ENCODE measurements at regions of chr16 and their contacts with region 1.

Region 1: GRCh38 chr16:67667817-67668494 is 1.3 kb downstream of the C16orf86 start:
- DNase-seq: peak; percentile 94
- H3K4me3 Mint-ChIP-seq: peak overlapping the region; percentile 91
- H3K27ac Mint-ChIP-seq: no peak overlapping the region
- H3K4me1 Mint-ChIP-seq: peaks cover 22% of the 10 kb centered on the region
- H3K27me3 Mint-ChIP-seq: no peaks in the 10 kb centered on the region

Region 2: DNA sequence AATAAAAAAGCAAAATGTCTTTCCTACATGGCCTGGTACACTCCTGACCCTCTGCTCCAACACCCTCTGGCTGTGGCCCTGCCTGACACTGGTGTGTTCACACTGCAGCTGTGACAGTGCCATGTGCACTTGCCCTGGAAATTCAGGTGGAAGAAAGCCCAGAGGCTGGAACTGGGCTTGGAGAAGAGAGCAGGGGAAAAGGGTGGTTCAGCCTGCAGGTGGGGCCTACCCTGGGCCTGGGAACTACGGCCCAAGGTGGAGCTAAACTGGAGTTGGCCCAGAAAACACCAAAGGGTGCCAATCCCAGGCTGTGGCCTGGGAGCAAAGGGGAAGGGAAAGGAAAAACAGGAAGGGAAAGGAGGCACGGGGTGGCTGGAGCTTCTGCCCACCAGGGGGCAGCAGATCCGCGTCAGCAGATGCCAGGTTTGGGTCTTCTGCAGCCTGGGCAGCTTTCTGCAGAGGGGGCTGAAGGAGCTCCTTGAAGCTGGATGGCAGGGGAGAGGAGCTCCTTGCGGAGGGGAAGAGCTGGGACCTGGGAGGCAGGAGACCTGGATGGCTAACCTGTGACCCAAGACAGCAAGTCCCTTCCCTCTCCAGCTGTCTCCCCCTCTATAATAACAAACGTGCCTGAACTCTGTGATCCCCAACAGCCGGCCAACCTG is 121.1 kb before region 1 on chr16:
- intact Hi-C with region 1: loop called (anchors 1 kb)
- DNase-seq: peak; percentile 92
- H3K4me3 Mint-ChIP-seq: peak overlapping the region; percentile 58
- H3K27ac Mint-ChIP-seq: peak overlapping the region; percentile 89
- H3K4me1 Mint-ChIP-seq: peaks cover 35% of the 10 kb centered on the region
- H3K27me3 Mint-ChIP-seq: no peaks in the 10 kb centered on the region

Region 3: DNA sequence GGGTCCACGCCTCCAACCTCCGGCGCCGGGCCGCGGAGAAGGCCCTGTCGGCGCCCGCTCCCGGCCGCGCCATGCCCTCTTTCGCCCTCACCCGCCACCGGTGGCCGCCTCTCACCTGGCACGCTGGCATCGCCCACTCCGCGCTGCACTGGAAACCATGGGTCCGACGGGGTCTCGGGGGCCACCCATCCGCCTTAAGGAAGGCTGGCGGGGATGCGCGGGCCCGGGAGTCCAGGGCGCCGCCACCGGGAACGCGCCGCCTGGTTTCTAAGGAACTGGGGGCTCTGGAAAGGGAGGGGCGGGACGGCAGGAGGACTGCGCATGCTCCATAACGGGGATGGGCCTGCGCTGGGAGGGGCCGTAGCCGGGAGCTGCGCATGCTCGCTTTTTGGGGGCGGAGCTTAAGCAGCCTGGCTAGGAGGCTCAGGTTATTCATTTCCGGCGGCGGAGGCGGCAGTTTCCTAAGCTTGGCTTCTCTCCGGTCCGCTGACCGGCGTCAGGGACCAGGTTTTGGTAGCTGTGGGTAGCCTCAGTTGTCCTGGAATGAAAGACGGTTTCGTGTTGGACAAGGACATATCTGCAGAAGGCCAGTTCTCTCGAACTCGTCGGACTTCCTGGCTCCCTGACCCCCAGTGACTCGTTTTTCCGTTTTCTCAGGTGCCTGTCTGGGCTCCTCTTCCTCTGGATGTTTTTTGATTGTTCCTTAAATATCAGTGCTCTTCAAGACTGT is 51.3 kb after region 1 on chr16 and contains the start of gene GFOD2:
- intact Hi-C with region 1: loop called (anchors 2 kb)
- DNase-seq: peak; percentile 100
- H3K4me3 Mint-ChIP-seq: peak within 1 kb of the TSS; percentile 88
- H3K27ac Mint-ChIP-seq: peak within 1 kb of the TSS; percentile 96
- H3K4me1 Mint-ChIP-seq: peaks cover 32% of the 10 kb centered on the region
- H3K27me3 Mint-ChIP-seq: no peaks in the 10 kb centered on the region
- total RNA-seq, gene GFOD2: 16.2 and 18.3 TPM in 2 replicates

Region 4: GRCh38 chr16:69339289-69340108 is 1671.5 kb after region 1 on chr16 and contains the starts of genes COG8 and NIP7:
- intact Hi-C with region 1: loop called (anchors 10 kb)
- DNase-seq: peak; percentile 98
- H3K4me3 Mint-ChIP-seq: peak within 1 kb of the TSS; percentile 98
- H3K27ac Mint-ChIP-seq: peak within 1 kb of the TSS; percentile 99
- H3K4me1 Mint-ChIP-seq: peaks cover 40% of the 10 kb centered on the region
- H3K27me3 Mint-ChIP-seq: no peaks in the 10 kb centered on the region
- total RNA-seq, gene COG8: 44.1 and 44.6 TPM in 2 replicates
- total RNA-seq, gene NIP7: 81.2 and 84.8 TPM in 2 replicates

Measured in activated CD4-positive, alpha-beta T cell treated with anti-CD3 and anti-CD28 coated beads, Interleukin-2, amount 10 ng/mL, durations not matched to agents 24 days and 14 days (primary cell).